CD4-positive, alpha-beta memory T cell (primary cell): ENCODE measurements at regions of chr4 and their contacts with region 1.

Region 1: DNA sequence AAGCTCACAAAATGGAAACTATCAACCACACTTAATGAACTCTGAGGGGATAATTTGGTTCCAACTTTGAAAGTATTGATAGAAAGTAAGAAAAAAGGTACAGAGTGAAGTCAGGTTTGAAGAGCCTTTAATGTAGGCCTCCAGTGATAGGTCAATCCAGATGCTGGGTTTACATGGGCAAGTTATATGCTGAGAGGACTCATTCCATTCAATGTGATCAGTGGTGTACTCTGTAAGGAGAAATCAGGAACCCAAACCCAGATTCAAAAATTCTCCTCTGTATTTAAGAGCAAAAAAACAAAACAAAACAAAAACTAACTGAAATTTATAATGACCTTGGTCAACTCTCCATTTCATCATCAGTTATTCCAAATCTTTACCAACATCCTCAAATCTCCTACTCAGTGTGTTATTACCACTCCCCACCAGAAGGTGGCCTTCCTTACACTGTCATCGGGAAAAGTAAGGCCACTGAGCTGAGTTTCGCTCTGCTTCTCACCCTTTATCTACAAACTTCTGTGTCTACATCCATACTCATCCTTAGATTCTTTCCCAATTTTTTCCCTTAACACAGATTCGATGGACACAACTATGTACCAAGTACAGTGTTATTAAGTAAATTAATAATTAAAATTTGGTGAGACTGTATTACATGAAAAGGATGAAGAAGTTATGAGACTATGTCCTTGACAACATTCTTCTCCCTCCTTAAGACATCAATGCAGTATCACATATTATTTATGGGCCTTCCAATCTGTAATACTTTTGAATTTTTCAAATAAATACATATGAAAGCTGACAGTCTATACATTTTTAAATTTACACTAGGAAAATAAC is 88.3 kb downstream of the ZAR1 start:
- DNase-seq: peak; percentile 49 to 62 (median 55)
- H3K4me3 ChIP-seq: no peak overlapping the region
- H3K4me3 Mint-ChIP-seq: no peak overlapping the region
- H3K27ac ChIP-seq: no peak overlapping the region
- H3K27ac Mint-ChIP-seq: peak overlapping the region in 3 of 7 donors; percentile 17 to 39 (median 26)
- H3K4me1 ChIP-seq: no peaks in the 10 kb centered on the region
- H3K4me1 Mint-ChIP-seq: peaks cover 0 to 5% (median 1%) of the 10 kb centered on the region in 4 donors
- H3K27me3 ChIP-seq: no peaks in the 10 kb centered on the region
- H3K27me3 Mint-ChIP-seq: no peaks in the 10 kb centered on the region

Region 2: GRCh38 chr4:48594180-48594579 is 15.8 kb after region 1 on chr4:
- CTCF ChIA-PET with region 1: interaction called, 15 read pairs
- POLR2A ChIA-PET with region 1: no interaction called
- intact Hi-C with region 1: no loop called
- DNase-seq: no peak
- H3K4me3 ChIP-seq: no peak overlapping the region
- H3K4me3 Mint-ChIP-seq: no peak overlapping the region
- H3K27ac ChIP-seq: no peak overlapping the region
- H3K27ac Mint-ChIP-seq: peak overlapping the region in 4 of 7 donors; percentile 49 to 80 (median 67)
- H3K4me1 ChIP-seq: no peaks in the 10 kb centered on the region
- H3K4me1 Mint-ChIP-seq: peaks cover 4 to 9% (median 6%) of the 10 kb centered on the region in 4 donors
- H3K27me3 ChIP-seq: no peaks in the 10 kb centered on the region
- H3K27me3 Mint-ChIP-seq: no peaks in the 10 kb centered on the region

Region 3: DNA sequence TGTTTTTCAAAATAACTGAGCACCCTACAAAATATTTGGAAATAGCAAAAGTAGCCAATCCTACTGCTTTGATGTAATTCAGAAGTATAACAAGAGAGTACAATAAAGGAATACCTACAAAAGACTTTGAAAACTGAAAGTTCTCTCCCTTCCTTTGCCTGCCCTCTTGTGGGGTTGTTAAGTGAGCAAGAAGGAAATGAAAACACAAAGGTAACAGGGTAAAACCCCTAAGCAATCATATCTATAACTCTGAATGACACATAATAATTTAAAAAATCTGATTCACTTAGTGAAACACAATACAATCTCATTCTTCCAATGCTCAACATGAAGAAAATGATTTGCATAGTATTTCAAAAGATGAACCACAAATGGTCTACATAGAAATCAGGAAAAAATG is 103.5 kb after region 1 on chr4:
- CTCF ChIA-PET with region 1: interaction called, 37 read pairs
- POLR2A ChIA-PET with region 1: no interaction called
- intact Hi-C with region 1: loop called (anchors 1 kb)
- DNase-seq: peak; percentile 26 to 45 (median 31)
- H3K4me3 ChIP-seq: no peak overlapping the region
- H3K4me3 Mint-ChIP-seq: peak overlapping the region in 1 of 8 donors; percentile 41
- H3K27ac ChIP-seq: no peak overlapping the region
- H3K27ac Mint-ChIP-seq: peak overlapping the region in 5 of 7 donors; percentile 19 to 78 (median 64)
- H3K4me1 ChIP-seq: peaks cover 22% of the 10 kb centered on the region
- H3K4me1 Mint-ChIP-seq: peaks cover 34 to 49% (median 38%) of the 10 kb centered on the region in 4 donors
- H3K27me3 ChIP-seq: no peaks in the 10 kb centered on the region
- H3K27me3 Mint-ChIP-seq: no peaks in the 10 kb centered on the region

Region 4: DNA sequence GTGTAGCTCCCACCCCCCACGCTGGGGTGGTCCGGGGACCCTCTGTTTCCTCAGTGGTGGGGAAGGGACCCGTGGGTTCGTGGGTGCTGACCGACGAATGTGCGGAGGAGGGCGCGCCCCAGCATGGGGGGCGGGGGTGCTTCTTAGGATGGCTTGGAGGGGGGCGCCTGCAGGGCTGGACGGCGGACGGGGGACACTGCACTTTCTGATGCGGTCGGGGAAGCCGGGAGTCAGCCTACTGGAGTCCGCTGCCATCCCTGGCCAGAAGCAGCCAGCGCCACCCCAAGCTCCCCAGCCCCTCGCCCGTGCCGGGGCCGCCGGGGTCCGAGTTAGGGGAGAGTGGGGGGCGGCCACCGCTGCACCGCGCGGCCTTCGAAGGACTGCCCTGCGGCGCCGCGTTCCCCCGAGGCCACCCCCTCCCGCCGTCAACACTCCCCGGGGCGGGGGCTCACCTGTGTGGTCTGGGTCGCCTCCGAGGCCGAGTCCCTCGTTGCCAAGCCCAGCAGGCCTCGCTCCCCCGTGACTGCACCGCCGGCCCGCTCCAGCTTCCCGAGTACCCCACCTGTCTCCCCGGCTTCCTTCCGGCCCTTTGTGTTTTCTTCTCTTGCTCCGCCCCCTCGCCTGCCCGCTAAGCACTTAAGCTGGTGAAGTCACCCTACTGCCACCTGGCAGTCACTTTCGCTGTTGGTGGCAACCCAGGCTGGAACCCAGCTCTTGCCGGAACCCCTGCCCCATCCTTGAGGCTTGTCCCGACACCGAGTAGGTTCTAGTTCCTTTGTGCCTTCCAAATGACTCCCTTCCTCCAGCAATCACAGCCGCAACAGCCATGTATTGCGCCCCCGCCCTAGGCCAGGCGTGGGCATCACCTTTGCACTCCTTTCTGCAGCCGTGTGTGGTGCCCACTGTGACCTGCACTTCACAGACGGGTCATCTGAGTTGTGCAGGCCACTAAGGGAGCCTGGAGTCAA is 328.1 kb after region 1 on chr4 and contains the start of gene OCIAD2:
- CTCF ChIA-PET with region 1: interaction called, 41 read pairs
- POLR2A ChIA-PET with region 1: interaction called, 4 read pairs
- intact Hi-C with region 1: loop called (anchors 1 kb)
- DNase-seq: peak; percentile 80 to 89 (median 82)
- H3K4me3 ChIP-seq: peak within 1 kb of the TSS; percentile 70 to 77
- H3K4me3 Mint-ChIP-seq: peak within 1 kb of the TSS; percentile 92 to 98 (median 93)
- H3K27ac ChIP-seq: peak within 1 kb of the TSS; percentile 59
- H3K27ac Mint-ChIP-seq: peak within 1 kb of the TSS; percentile 83 to 97 (median 94)
- H3K4me1 ChIP-seq: peaks cover 39% of the 10 kb centered on the region
- H3K4me1 Mint-ChIP-seq: peaks cover 31 to 55% (median 38%) of the 10 kb centered on the region in 4 donors
- H3K27me3 ChIP-seq: no peaks in the 10 kb centered on the region
- H3K27me3 Mint-ChIP-seq: no peaks in the 10 kb centered on the region
- total RNA-seq, gene OCIAD2: 102 to 108 TPM

Region 5: DNA sequence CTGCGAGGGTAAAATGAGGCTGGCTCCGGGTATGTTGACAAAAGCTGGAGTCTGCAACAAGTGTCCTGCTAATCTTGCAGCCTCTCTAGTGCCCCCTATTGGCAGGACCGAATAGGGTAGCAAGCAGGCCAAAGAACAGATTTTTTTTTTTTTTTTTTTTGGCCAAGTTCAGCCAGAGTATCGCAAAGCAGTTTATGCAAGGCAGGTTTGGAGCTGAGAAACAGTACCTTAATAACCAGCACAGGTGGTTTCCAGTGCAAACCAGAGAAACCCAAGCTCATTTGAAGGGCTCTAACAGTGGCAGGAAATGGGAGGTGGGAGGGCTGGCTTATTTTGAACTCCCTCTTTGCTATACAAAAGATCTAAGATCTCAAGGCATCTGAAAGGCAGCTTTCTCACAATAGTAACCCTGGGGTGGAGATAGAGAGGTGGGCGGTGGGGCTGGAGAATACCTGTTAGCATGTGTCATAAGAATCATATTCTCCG is 366.4 kb after region 1 on chr4:
- CTCF ChIA-PET with region 1: interaction called, 19 read pairs
- POLR2A ChIA-PET with region 1: no interaction called
- intact Hi-C with region 1: no loop called
- DNase-seq: peak in 4 of 5 donors; percentile 16 to 28 (median 18)
- H3K4me3 ChIP-seq: no peak overlapping the region
- H3K4me3 Mint-ChIP-seq: peak overlapping the region in 4 of 8 donors; percentile 30 to 72 (median 48)
- H3K27ac ChIP-seq: no peak overlapping the region
- H3K27ac Mint-ChIP-seq: peak overlapping the region in 4 of 7 donors; percentile 23 to 32 (median 27)
- H3K4me1 ChIP-seq: peaks cover 12% of the 10 kb centered on the region
- H3K4me1 Mint-ChIP-seq: peaks cover 7 to 13% (median 10%) of the 10 kb centered on the region in 4 donors
- H3K27me3 ChIP-seq: no peaks in the 10 kb centered on the region
- H3K27me3 Mint-ChIP-seq: no peaks in the 10 kb centered on the region